ENCODE measurements at regions of chr3 and their contacts with region 1.

Region 1: DNA sequence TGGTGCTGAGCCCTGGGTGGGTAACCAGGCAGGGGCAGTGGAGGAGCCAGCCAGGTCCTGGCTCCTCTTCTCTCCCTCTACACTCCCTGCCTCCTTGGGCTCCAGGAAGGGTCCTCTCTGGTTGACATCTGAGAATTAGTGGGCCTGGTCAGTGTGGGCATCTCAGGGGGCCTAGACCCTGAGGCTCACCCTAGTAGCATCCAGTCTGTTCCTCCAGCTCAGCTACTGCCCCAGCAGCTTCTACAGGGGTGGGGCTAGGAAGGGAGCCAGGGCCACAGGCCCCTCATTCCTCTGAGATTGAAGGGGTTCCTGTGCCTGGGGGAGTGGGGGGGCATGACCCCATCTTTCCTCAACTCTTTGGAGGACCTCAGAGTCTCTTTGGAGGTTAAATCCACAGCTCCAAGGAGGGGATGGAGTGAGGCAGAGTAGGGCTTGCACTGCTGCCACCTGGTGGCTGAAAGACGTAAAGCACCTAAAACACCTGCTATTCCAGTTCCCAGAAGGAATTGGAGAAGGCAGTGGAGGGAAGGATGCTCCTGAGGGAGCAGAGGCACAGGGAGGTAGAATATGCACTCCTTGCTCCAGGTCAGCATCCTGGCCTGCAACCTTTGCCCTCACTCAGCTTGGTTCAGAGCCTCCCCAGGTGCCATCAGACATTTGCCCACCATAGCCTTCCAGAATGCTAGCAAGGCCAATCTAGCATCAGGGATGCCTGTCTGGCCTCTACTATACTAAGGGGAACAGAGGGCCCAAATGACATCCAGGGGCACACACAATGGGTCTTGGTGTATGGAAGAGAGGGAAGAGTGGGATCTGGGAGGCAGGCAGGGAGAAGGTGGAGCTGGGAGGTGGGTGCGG is 25.1 kb downstream of the C3orf18 start:
- DNase-seq: peak; percentile 57 to 77
- H3K4me3 ChIP-seq: no peak overlapping the region
- H3K4me3 Mint-ChIP-seq: no peak overlapping the region
- H3K27ac Mint-ChIP-seq: no peak overlapping the region
- H3K4me1 ChIP-seq: no peaks in the 10 kb centered on the region
- H3K4me1 Mint-ChIP-seq: no peaks in the 10 kb centered on the region
- H3K27me3 ChIP-seq: no peaks in the 10 kb centered on the region
- H3K27me3 Mint-ChIP-seq: peaks cover 5% of the 10 kb centered on the region
- CTCF ChIP-seq: peak; percentile 82 to 87

Region 2: DNA sequence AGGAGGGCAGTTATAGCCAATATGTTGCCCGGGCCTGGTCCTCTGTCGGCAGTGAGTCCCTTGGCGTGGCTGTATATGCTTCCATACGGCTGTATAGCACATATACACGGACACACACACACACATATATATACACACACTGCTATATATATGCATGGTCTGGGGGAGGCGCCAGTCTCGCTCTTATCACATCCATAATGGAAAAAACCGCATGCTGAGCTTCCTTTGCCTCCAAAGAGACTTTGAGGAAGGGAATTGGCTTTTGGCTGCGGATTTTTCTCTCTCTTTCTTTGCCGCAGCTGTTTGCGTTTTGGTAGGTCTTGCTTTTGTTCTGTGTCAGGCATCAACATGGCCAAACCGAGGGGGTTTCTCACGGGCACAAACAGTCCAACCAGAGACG is 171.8 kb before region 1 on chr3:
- CTCF ChIA-PET with region 1: interaction called, 14 read pairs
- POLR2A ChIA-PET with region 1: no interaction called
- intact Hi-C with region 1: no loop called
- DNase-seq: peak in 1 of 2 experiments; percentile 28
- H3K4me3 ChIP-seq: no peak overlapping the region
- H3K4me3 Mint-ChIP-seq: no peak overlapping the region
- H3K27ac Mint-ChIP-seq: no peak overlapping the region
- H3K4me1 ChIP-seq: 0 out of 2 replicates have a peak, but pooled peaks cover 2% of the 10 kb centered on the region
- H3K4me1 Mint-ChIP-seq: no peaks in the 10 kb centered on the region
- H3K27me3 ChIP-seq: no peaks in the 10 kb centered on the region
- H3K27me3 Mint-ChIP-seq: peaks cover 15% of the 10 kb centered on the region
- CTCF ChIP-seq: no peak

Region 3: DNA sequence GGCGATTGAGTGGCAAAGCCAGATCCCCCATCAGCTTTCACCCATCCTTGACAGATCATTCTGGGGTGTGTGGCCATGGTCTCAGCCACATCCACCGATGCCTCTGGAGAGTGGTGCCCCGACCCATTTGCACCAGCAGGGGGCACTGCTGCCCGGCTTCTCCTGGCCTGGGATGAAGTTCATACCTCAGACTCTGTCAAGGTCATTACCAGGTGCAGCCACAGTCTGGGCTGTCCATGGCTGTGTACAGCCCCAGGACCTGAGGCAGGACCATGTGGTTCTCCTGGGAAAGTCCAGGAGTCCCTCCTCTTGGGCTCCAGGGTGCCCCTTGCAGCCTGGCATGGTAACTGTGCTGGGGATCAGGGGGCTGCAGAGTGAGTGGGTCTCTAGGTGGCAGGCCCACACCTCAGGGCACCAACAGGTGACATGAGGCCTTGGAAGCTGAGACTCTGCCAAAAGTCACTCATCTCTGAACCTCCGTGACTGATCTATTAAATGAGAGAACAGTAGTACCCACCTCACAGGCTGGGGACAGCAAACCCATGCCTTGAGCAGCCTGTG is 106.2 kb before region 1 on chr3:
- CTCF ChIA-PET with region 1: interaction called, 3 read pairs
- POLR2A ChIA-PET with region 1: no interaction called
- intact Hi-C with region 1: loop called (anchors 1 kb)
- DNase-seq: peak; percentile 43 to 67
- H3K4me3 ChIP-seq: no peak overlapping the region
- H3K4me3 Mint-ChIP-seq: no peak overlapping the region
- H3K27ac Mint-ChIP-seq: no peak overlapping the region
- H3K4me1 ChIP-seq: peaks cover 7% of the 10 kb centered on the region; the same call in 1 of the 2 replicates
- H3K4me1 Mint-ChIP-seq: peaks cover 11% of the 10 kb centered on the region
- H3K27me3 ChIP-seq: no peaks in the 10 kb centered on the region; the same call in 1 of the 2 replicates
- H3K27me3 Mint-ChIP-seq: peaks cover 9% of the 10 kb centered on the region
- CTCF ChIP-seq: peak; percentile 76 to 87

Region 4: GRCh38 chr3:50519471-50520089 is 22.8 kb before region 1 on chr3:
- CTCF ChIA-PET with region 1: interaction called, 10 read pairs
- POLR2A ChIA-PET with region 1: no interaction called
- intact Hi-C with region 1: loop called (anchors 1 kb)
- DNase-seq: peak; percentile 74 to 83
- H3K4me3 ChIP-seq: no peak overlapping the region
- H3K4me3 Mint-ChIP-seq: no peak overlapping the region
- H3K27ac Mint-ChIP-seq: no peak overlapping the region
- H3K4me1 ChIP-seq: 0 out of 2 replicates have a peak, but pooled peaks cover 11% of the 10 kb centered on the region
- H3K4me1 Mint-ChIP-seq: no peaks in the 10 kb centered on the region
- H3K27me3 ChIP-seq: no peaks in the 10 kb centered on the region; the same call in none of the 2 replicates
- H3K27me3 Mint-ChIP-seq: peaks cover 4% of the 10 kb centered on the region
- CTCF ChIP-seq: peak; percentile 91 to 96

Region 5: GRCh38 chr3:50749822-50750221 is 207.4 kb after region 1 on chr3:
- CTCF ChIA-PET with region 1: no interaction called
- POLR2A ChIA-PET with region 1: no interaction called
- intact Hi-C with region 1: no loop called
- DNase-seq: no peak
- H3K4me3 ChIP-seq: no peak overlapping the region
- H3K4me3 Mint-ChIP-seq: no peak overlapping the region
- H3K27ac Mint-ChIP-seq: no peak overlapping the region
- H3K4me1 ChIP-seq: no peaks in the 10 kb centered on the region
- H3K4me1 Mint-ChIP-seq: no peaks in the 10 kb centered on the region
- H3K27me3 ChIP-seq: no peaks in the 10 kb centered on the region; the same call in 1 of the 2 replicates
- H3K27me3 Mint-ChIP-seq: peaks cover 11% of the 10 kb centered on the region
- CTCF ChIP-seq: no peak

Region 6: DNA sequence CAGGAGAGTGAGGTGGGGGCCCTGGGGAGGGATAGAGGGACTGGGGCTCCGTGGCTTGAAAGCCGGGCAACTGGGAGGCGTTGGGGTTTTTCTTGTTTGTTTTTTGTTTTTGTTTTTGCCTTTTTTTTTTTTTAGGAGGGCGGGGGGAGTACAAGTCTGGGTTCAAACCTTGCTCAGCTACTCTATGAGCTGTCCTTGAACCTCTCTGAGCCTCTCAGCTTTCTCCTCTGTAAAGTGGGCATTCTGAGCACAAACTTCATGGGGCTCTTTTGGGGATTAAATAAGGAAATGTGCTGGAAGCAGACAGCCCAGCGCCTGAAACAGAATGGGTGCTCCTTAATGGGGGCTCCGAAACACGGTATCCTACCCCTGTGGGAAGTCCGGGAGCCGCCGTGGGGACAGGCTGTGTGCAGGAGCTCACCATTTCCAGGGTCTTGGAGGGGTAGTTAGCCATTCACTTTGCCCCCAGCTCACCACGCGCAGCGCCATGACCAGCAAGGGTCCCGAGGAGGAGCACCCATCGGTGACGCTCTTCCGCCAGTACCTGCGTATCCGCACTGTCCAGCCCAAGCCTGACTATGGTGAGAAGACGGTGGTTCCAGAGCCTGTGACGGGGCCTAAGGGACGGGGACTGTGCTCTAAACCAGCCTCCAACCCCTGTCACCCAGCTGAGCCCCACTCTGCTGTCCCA is 1441.3 kb after region 1 on chr3:
- CTCF ChIA-PET with region 1: no interaction called
- POLR2A ChIA-PET with region 1: no interaction called
- intact Hi-C with region 1: no loop called
- DNase-seq: no peak
- H3K4me3 ChIP-seq: peak overlapping the region; percentile 46
- H3K4me3 Mint-ChIP-seq: peak overlapping the region; percentile 99
- H3K27ac Mint-ChIP-seq: peak overlapping the region; percentile 86
- H3K4me1 ChIP-seq: peaks cover 46% of the 10 kb centered on the region
- H3K4me1 Mint-ChIP-seq: peaks cover 20% of the 10 kb centered on the region
- H3K27me3 ChIP-seq: no peaks in the 10 kb centered on the region
- H3K27me3 Mint-ChIP-seq: no peaks in the 10 kb centered on the region
- CTCF ChIP-seq: no peak

Measured in Caco-2 (cell line).